AG04450 (cell line): ENCODE measurements at regions of chr11 and their contacts with region 1.

Region 1: DNA sequence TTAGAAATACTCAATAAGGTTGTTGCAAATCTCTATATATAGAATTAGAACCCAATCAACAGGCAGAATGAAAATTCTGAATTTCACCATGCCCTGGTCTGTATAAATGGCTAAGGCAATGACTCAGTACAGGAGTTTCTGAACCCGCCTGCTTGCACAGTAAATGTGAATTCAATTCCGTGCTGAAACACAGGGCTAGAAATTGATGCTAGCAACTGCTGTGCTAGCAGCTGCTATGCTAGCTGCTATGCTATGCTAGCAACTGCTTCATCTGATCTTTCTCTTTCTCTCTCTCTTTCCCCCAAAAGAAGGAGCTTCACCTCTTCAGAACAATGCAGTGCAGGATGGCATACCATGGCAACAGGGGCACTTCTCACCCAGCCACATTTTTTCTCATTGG is 9.7 kb upstream of the OR52J3 start:
- DNase-seq: no peak
- H3K4me3 ChIP-seq: no peak overlapping the region
- H3K27ac ChIP-seq: no peak overlapping the region
- H3K27me3 ChIP-seq: no peaks in the 10 kb centered on the region
- CTCF ChIP-seq: no peak

Region 2: DNA sequence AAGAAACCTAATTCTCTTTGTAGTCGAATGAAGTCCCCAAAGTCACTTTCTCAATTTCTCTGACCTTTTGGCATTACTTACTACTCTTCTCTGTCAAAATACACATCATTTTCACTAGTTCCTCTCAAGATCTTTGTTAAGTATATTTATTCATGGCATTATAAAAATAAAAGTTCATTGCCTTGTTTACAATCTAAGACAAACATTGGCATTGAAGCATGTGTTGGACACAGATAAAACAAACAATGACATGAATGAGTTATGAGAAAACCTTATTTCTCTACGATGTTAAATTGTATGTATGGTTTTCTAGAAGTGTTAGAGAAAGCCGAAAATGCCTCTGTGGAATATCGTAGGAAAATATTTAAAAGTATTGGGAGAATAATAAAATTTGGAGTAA is 103.9 kb before region 1 on chr11:
- CTCF ChIA-PET with region 1: no interaction called
- POLR2A ChIA-PET with region 1: interaction called, 15 read pairs
- DNase-seq: no peak
- H3K4me3 ChIP-seq: no peak overlapping the region
- H3K27ac ChIP-seq: no peak overlapping the region
- H3K27me3 ChIP-seq: no peaks in the 10 kb centered on the region
- CTCF ChIP-seq: no peak

Region 3: DNA sequence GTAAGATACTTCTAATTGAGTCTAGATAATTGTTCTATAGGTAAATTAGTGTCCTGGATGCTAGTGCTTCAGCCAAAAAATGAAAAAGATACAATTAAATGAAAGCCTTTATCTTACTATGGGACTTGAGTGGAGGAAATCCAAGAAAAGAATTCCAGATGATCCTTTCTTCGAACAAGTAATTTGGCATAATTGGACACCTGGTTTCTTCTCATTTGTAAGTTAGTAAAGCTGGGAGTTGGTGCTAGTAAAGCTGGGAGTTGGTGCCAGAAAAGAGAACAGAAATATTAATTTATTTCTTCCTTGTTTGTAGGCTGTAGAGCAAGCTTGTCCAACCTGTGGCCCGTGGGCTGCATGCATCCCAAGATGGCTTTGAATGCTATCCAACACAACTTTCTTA is 151.5 kb after region 1 on chr11:
- CTCF ChIA-PET with region 1: no interaction called
- POLR2A ChIA-PET with region 1: no interaction called
- DNase-seq: no peak
- H3K4me3 ChIP-seq: no peak overlapping the region
- H3K27ac ChIP-seq: no peak overlapping the region
- H3K27me3 ChIP-seq: peaks cover 2% of the 10 kb centered on the region
- CTCF ChIP-seq: no peak

Region 4: GRCh38 chr11:5226732-5227310 is 190.2 kb after region 1 on chr11 and contains the start of gene HBB:
- CTCF ChIA-PET with region 1: no interaction called
- POLR2A ChIA-PET with region 1: no interaction called
- DNase-seq: no peak
- H3K4me3 ChIP-seq: no peak within 1 kb of the TSS
- H3K27ac ChIP-seq: no peak within 1 kb of the TSS
- H3K27me3 ChIP-seq: no peaks in the 10 kb centered on the region
- CTCF ChIP-seq: no peak
- polyA plus RNA-seq, gene HBB: 0.22 and 0.26 TPM in 2 replicates

Region 5: DNA sequence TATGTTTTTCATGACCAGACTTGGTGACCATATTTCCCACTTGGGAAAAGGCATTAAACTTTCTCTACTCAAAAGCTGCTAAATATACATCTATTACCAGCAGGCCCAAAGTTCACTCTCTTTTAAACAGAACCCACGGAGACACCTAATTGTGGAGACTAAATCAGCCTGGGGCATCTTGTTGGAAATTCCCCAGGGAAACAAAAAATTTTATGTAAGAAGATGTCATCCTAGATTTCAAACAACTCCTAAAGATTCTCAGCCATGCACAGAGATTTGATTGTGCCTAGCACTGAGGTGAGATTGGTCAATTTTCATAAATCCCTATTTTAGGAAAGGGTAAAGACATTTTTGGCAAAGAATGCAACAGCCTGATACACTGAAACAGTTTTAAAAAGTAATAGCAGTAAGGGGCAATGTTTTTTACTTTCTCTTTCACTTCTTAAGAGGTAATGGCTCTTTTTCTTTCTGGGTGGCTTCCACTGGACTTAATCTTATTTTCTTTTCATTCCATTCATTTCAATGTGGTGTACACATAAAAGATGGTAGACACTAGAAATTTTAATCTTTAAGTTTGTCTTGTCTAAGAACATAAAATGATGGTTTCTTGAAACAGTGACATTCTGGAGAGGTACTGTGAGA is 781.7 kb after region 1 on chr11:
- CTCF ChIA-PET with region 1: no interaction called
- POLR2A ChIA-PET with region 1: no interaction called
- DNase-seq: no peak
- H3K4me3 ChIP-seq: peak overlapping the region; percentile 18; the same call in 1 of the 2 replicates
- H3K27ac ChIP-seq: no peak overlapping the region
- H3K27me3 ChIP-seq: no peaks in the 10 kb centered on the region
- CTCF ChIP-seq: no peak